Left ventricle myocardium inferior (tissue), 1 donor: ENCODE measurements at regions of chr6 and their contacts with region 1.

Region 1: DNA sequence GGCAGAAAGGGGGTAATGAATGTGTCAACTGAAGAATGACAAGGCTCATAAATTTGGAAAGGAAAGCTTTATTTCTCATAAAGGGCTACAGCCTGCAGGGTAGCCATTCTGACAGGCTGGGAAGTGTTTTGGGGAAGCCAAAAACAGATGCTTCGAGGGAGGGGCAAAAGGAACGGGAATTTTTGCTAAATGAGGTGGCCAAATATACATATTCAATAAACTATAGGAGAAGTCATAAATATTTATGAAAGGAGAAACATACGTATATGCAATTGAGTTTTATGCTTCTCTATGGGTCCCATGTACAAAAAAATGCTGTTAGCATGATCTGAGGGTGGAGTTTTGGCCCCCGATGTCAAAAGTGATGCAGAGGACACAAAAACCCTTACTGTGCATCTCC is 180.7 kb downstream of the FNDC1 start:
- DNase-seq: no peak
- H3K4me3 ChIP-seq: no peak overlapping the region
- H3K27ac ChIP-seq: no peak overlapping the region
- H3K4me1 ChIP-seq: no peaks in the 10 kb centered on the region
- H3K27me3 ChIP-seq: peaks cover 28% of the 10 kb centered on the region
- CTCF ChIP-seq: no peak

Region 2: DNA sequence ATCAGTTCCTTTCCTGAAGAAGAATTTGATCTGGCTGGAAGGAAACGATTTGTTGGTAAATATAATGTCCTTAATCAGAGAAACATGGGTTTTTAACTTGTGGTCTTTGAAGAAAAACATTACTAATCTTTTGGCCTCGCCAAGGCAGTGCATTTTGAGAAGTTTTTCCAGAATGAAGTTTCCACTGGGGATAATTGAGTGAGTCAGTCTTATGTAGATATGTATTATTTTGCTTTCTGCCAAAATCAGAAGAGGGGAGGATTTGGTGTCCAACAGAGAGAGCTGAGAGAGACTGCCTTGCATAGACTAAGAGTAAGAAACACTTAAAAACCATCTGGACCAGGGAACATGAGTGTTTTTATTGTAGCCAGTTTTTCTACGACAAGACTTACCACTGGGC is 100.8 kb before region 1 on chr6:
- intact Hi-C with region 1: no loop called
- DNase-seq: no peak
- H3K4me3 ChIP-seq: no peak overlapping the region
- H3K27ac ChIP-seq: peak overlapping the region; percentile 44
- H3K4me1 ChIP-seq: peaks cover 4% of the 10 kb centered on the region
- H3K27me3 ChIP-seq: peaks cover 18% of the 10 kb centered on the region
- CTCF ChIP-seq: no peak

Region 3: GRCh38 chr6:159535656-159536350 is 185.9 kb after region 1 on chr6:
- intact Hi-C with region 1: loop called (anchors 5 kb)
- DNase-seq: no peak
- H3K4me3 ChIP-seq: no peak overlapping the region
- H3K27ac ChIP-seq: no peak overlapping the region
- H3K4me1 ChIP-seq: no peaks in the 10 kb centered on the region
- H3K27me3 ChIP-seq: peaks cover 22% of the 10 kb centered on the region
- CTCF ChIP-seq: no peak